HAP-1 (cell line): ENCODE measurements at regions of chr3 and their contacts with region 1.

Region 1: DNA sequence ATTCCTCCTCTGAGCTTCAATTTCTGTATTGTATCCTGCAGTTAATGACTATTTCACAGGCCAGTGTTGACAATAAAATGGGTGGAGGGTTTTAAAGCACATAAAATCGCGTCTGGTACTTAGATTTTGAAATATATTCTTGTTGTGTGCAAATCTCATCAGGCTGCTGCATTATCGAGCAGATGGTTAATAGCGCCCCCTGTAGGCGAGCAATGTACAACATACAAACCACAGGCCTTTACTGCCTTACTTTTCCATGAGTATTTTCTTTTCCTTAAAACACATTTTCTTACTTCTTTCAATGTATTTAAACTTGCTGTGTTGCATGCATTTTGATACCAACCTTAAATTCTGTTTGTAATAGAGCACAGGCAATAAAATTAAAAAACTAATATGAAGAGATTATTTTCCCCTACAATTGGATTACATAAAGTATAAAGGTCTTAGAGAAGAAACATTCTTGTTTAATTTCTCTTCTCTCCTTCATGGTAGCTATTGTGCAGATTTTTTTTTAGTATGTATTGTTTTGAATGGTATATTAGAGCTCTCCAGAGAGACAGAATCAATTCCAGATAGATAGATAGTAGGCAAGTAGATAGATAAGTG is 608.4 kb downstream of the CADM2 start:
- DNase-seq: peak; percentile 68 to 86
- H3K4me3 ChIP-seq: no peak overlapping the region
- H3K4me1 ChIP-seq: no peaks in the 10 kb centered on the region; the same call in 1 of the 2 replicates
- H3K27me3 ChIP-seq: no peaks in the 10 kb centered on the region

Region 2: GRCh38 chr3:84958495-84959469 is 608.4 kb before region 1 on chr3 and contains the start of gene CADM2:
- in situ Hi-C with region 1: loop called (anchors 25 kb)
- DNase-seq: peak; percentile 90 to 96
- H3K4me3 ChIP-seq: peak within 1 kb of the TSS; percentile 83
- H3K4me1 ChIP-seq: peaks cover 22% of the 10 kb centered on the region
- H3K27me3 ChIP-seq: peaks cover 6% of the 10 kb centered on the region; the same call in 1 of the 2 replicates

Region 3: GRCh38 chr3:85110393-85110792 is 456.8 kb before region 1 on chr3:
- in situ Hi-C with region 1: loop called (anchors 25 kb)
- DNase-seq: no peak
- H3K4me3 ChIP-seq: no peak overlapping the region
- H3K4me1 ChIP-seq: peaks cover 3% of the 10 kb centered on the region; the same call in 1 of the 2 replicates
- H3K27me3 ChIP-seq: no peaks in the 10 kb centered on the region

Region 4: GRCh38 chr3:85342915-85343314 is 224.3 kb before region 1 on chr3:
- in situ Hi-C with region 1: loop called (anchors 25 kb)
- DNase-seq: peak; percentile 58 to 61
- H3K4me3 ChIP-seq: no peak overlapping the region
- H3K4me1 ChIP-seq: no peaks in the 10 kb centered on the region; the same call in 1 of the 2 replicates
- H3K27me3 ChIP-seq: no peaks in the 10 kb centered on the region